CD4-positive, alpha-beta memory T cell (primary cell): ENCODE measurements at regions of chr18 and their contacts with region 1.

Region 1: DNA sequence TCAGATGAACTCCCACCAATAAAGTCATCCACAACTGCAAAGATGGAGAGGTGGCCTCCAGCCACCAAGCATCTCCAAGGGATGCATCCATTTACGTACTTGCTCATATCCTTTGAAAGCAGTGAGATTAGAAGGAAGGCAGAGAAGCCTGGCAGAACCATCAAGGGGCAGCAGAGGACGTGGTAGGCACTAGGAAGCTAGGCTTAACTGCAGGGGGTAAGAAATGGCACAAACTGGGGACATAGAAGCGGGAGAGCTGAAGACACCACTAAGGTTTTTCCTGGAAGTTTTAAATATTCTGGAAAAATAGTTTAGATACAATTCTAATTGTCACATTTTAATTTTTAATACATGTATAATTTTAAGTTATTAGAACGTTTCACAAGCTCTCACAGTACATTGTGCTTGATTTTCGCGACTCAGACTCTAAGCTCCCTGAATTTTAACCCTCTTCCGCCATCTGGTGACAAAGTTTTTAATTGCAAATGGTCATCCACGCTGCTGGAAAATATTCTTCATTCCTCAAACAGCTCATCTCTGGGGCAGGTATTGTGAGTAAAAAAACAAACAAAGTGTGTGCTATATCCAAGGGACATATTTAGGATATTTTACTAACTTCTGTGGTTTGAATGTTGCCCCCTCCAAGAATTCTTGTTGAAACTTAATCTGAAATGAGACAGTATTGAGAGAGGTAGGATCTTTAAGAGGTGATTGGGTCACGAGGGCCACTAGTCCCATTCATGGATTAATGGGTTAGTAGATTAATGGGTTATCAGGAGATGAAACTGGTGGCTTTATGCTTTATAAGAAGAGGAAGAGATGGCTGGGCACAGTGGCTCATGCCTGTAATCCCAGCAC is 1.6 kb upstream of the PSTPIP2 start:
- DNase-seq: peak; percentile 63 to 75 (median 68)
- H3K4me3 ChIP-seq: no peak overlapping the region
- H3K4me3 Mint-ChIP-seq: peak overlapping the region in 7 of 8 donors; percentile 22 to 89 (median 83)
- H3K27ac ChIP-seq: no peak overlapping the region
- H3K27ac Mint-ChIP-seq: peak overlapping the region in 2 of 7 donors; percentile 19 to 76
- H3K4me1 ChIP-seq: peaks cover 43% of the 10 kb centered on the region
- H3K4me1 Mint-ChIP-seq: peaks cover 25 to 42% (median 34%) of the 10 kb centered on the region in 4 donors
- H3K27me3 ChIP-seq: no peaks in the 10 kb centered on the region
- H3K27me3 Mint-ChIP-seq: no peaks in the 10 kb centered on the region

Region 2: GRCh38 chr18:45664824-45665763 is 408.6 kb before region 1 on chr18:
- CTCF ChIA-PET with region 1: interaction called, 92 read pairs
- POLR2A ChIA-PET with region 1: interaction called, 11 read pairs
- intact Hi-C with region 1: loop called (anchors 1 kb)
- DNase-seq: peak; percentile 61 to 71 (median 66)
- H3K4me3 ChIP-seq: no peak overlapping the region
- H3K4me3 Mint-ChIP-seq: peak overlapping the region in 7 of 8 donors; percentile 21 to 80 (median 61)
- H3K27ac ChIP-seq: no peak overlapping the region
- H3K27ac Mint-ChIP-seq: peak overlapping the region; percentile 47 to 91 (median 88)
- H3K4me1 ChIP-seq: peaks cover 56% of the 10 kb centered on the region
- H3K4me1 Mint-ChIP-seq: peaks cover 42 to 63% (median 52%) of the 10 kb centered on the region in 4 donors
- H3K27me3 ChIP-seq: no peaks in the 10 kb centered on the region
- H3K27me3 Mint-ChIP-seq: no peaks in the 10 kb centered on the region

Region 3: GRCh38 chr18:45910405-45911023 is 163.2 kb before region 1 on chr18:
- CTCF ChIA-PET with region 1: interaction called, 33 read pairs
- POLR2A ChIA-PET with region 1: no interaction called
- intact Hi-C with region 1: loop called (anchors 1 kb)
- DNase-seq: peak; percentile 45 to 61 (median 57)
- H3K4me3 ChIP-seq: no peak overlapping the region
- H3K4me3 Mint-ChIP-seq: no peak overlapping the region
- H3K27ac ChIP-seq: no peak overlapping the region
- H3K27ac Mint-ChIP-seq: peak overlapping the region in 2 of 7 donors; percentile 12 to 70
- H3K4me1 ChIP-seq: no peaks in the 10 kb centered on the region
- H3K4me1 Mint-ChIP-seq: peaks cover 0 to 6% (median 4%) of the 10 kb centered on the region in 4 donors
- H3K27me3 ChIP-seq: no peaks in the 10 kb centered on the region
- H3K27me3 Mint-ChIP-seq: no peaks in the 10 kb centered on the region

Region 4: GRCh38 chr18:45945669-45946068 is 128.0 kb before region 1 on chr18:
- CTCF ChIA-PET with region 1: interaction called, 14 read pairs
- POLR2A ChIA-PET with region 1: no interaction called
- intact Hi-C with region 1: no loop called
- DNase-seq: no peak
- H3K4me3 ChIP-seq: no peak overlapping the region
- H3K4me3 Mint-ChIP-seq: no peak overlapping the region
- H3K27ac ChIP-seq: no peak overlapping the region
- H3K27ac Mint-ChIP-seq: peak overlapping the region in 1 of 7 donors; percentile 42
- H3K4me1 ChIP-seq: no peaks in the 10 kb centered on the region
- H3K4me1 Mint-ChIP-seq: peaks cover 0 to 5% (median 3%) of the 10 kb centered on the region in 4 donors
- H3K27me3 ChIP-seq: no peaks in the 10 kb centered on the region
- H3K27me3 Mint-ChIP-seq: no peaks in the 10 kb centered on the region

Region 5: GRCh38 chr18:45981821-45982220 is 91.9 kb before region 1 on chr18:
- CTCF ChIA-PET with region 1: interaction called, 47 read pairs
- POLR2A ChIA-PET with region 1: no interaction called
- intact Hi-C with region 1: no loop called
- DNase-seq: no peak
- H3K4me3 ChIP-seq: no peak overlapping the region
- H3K4me3 Mint-ChIP-seq: no peak overlapping the region
- H3K27ac ChIP-seq: no peak overlapping the region
- H3K27ac Mint-ChIP-seq: no peak overlapping the region
- H3K4me1 ChIP-seq: no peaks in the 10 kb centered on the region
- H3K4me1 Mint-ChIP-seq: peaks cover 0 to 7% (median under 1%) of the 10 kb centered on the region in 4 donors
- H3K27me3 ChIP-seq: no peaks in the 10 kb centered on the region
- H3K27me3 Mint-ChIP-seq: no peaks in the 10 kb centered on the region

Region 6: DNA sequence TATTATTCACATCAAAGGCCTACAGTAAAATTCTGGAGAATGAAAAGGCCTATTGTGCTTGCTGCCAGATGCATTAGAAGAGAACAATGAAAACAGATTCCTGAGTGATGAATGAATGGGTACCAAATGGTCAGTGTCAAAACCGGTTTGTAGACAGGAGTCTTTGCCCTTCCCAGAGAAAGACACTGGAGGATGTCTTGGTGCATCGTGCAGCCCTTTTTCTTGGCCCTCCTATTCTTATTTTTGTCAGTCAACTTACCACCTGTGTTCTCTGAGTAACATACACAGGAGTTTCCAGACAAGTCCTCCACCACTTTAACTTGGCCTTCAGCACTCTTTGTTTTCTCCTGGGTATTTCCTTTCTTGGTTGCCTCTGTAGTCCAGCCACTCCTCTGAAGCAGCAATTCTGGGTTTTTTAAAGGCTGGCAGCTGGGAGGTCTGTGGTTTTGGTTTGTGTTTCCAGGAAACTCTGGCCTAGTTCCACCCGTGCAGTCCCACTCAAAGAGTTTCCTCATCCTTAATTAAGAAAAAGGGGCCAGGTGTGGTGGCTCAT is 31.1 kb before region 1 on chr18:
- CTCF ChIA-PET with region 1: interaction called, 12 read pairs
- POLR2A ChIA-PET with region 1: interaction called, 3 read pairs
- intact Hi-C with region 1: no loop called
- DNase-seq: no peak
- H3K4me3 ChIP-seq: no peak overlapping the region
- H3K4me3 Mint-ChIP-seq: peak overlapping the region in 7 of 8 donors; percentile 51 to 85 (median 67)
- H3K27ac ChIP-seq: no peak overlapping the region
- H3K27ac Mint-ChIP-seq: peak overlapping the region; percentile 55 to 84 (median 74)
- H3K4me1 ChIP-seq: peaks cover 46% of the 10 kb centered on the region
- H3K4me1 Mint-ChIP-seq: peaks cover 40 to 55% (median 46%) of the 10 kb centered on the region in 4 donors
- H3K27me3 ChIP-seq: no peaks in the 10 kb centered on the region
- H3K27me3 Mint-ChIP-seq: no peaks in the 10 kb centered on the region

Region 7: GRCh38 chr18:46084431-46084830 is 10.7 kb after region 1 on chr18:
- CTCF ChIA-PET with region 1: interaction called, 16 read pairs
- POLR2A ChIA-PET with region 1: interaction called, 4 read pairs
- intact Hi-C with region 1: no loop called
- DNase-seq: no peak
- H3K4me3 ChIP-seq: no peak overlapping the region
- H3K4me3 Mint-ChIP-seq: no peak overlapping the region
- H3K27ac ChIP-seq: no peak overlapping the region
- H3K27ac Mint-ChIP-seq: peak overlapping the region in 1 of 7 donors; percentile 27
- H3K4me1 ChIP-seq: no peaks in the 10 kb centered on the region
- H3K4me1 Mint-ChIP-seq: peaks cover 0 to 7% (median under 1%) of the 10 kb centered on the region in 4 donors
- H3K27me3 ChIP-seq: no peaks in the 10 kb centered on the region
- H3K27me3 Mint-ChIP-seq: no peaks in the 10 kb centered on the region

Region 8: GRCh38 chr18:46711444-46711863 is 637.8 kb after region 1 on chr18:
- CTCF ChIA-PET with region 1: no interaction called
- POLR2A ChIA-PET with region 1: no interaction called
- intact Hi-C with region 1: no loop called
- DNase-seq: no peak
- H3K4me3 ChIP-seq: no peak overlapping the region
- H3K4me3 Mint-ChIP-seq: no peak overlapping the region
- H3K27ac ChIP-seq: no peak overlapping the region
- H3K27ac Mint-ChIP-seq: no peak overlapping the region
- H3K4me1 ChIP-seq: no peaks in the 10 kb centered on the region
- H3K4me1 Mint-ChIP-seq: no peaks in the 10 kb centered on the region
- H3K27me3 ChIP-seq: no peaks in the 10 kb centered on the region
- H3K27me3 Mint-ChIP-seq: peaks cover 2 to 4% of the 10 kb centered on the region in 2 donors